ENCODE measurements at regions of chr3 and their contacts with region 1.

Region 1: DNA sequence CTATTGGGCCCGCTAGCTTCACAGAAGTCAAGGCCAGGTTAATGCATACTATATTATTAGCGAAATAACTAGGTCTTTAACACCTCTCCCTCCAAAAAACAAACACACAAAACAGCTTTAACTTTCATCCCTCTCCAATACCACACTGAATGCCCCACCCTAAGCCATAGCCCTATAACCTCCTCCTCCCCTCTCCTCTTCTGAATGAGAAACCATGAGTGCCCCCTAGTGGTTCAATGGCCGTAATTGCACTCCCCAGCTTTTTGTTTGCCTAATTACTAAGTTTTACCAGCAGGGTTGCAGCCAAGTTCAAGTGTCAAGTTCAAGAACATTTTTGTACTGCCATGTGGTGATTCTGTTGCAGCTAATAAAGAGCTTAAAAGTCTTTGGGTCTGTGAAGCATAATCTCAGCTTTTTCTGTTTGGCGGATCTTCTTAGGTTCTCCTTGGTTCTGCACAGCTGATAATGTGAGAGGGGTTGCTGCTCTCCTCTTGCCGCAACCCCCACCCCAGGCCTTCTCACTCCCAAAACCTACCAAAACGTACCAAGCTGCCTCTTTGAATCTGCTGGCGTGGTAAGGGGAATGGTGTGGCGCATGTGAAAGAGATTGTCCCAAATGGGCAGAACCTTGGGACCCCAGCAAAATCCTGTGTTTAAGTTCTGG is 57.9 kb downstream of the RPL22L1 start:
- DNase-seq: no peak
- ATAC-seq: peak; percentile 74

Region 2: DNA sequence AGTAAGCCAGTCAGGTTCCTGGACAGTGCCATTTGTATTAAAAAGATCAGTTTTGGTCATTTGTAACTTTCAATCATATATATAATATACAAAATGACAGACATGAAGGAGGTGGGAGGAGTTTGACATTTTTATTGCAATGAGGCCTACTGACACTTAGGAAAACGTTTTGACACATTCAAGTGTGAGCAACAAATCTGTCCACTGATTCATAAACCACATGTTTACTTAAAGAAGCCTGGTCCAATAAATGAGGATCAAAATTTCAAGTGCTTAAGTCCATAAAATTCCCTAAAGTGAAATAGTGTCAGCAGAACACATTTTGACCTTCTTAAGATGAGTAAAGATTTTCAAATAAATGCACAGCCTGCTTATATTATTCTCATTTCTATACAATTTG is 1285.8 kb before region 1 on chr3:
- intact Hi-C with region 1: no loop called
- DNase-seq: no peak
- ATAC-seq: no peak

Region 3: DNA sequence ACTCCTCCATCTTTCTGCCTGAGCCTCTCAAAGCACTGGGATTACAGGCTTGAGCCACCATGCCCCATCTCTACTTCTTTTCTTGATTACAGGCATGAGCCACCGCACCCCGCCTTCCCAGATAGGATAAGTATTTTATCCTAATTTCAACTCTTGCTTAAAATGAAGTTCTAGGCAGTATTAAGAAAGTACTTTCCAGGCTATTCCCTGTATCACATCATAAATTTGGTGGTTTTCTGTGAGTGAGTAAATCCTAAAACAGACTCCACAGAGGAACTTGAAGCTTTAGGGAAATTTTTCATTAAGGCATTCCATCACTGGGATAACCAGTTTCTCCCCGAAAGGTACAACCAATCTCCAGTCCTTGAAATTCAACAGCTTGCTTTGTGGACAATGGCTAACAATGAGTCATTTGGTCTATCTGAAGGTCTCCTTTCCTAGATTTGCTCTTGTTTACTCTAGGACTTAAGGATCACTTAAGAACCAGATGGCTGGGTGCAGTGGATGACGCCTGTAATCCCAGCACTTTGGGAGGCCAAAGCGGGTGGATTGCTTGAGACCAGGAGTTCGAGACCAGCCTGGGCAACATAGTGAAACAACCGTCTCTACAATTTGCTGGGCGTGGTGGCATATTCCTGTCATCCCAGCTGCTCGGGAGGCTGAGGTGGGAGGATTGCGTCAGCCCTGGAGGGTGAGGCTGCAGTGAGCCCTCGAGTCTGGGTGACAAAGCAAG is 504.2 kb before region 1 on chr3:
- intact Hi-C with region 1: loop called (anchors 5 kb)
- DNase-seq: no peak
- ATAC-seq: no peak

Region 4: GRCh38 chr3:170414202-170414663 is 397.8 kb before region 1 on chr3:
- intact Hi-C with region 1: loop called (anchors 2 kb)
- DNase-seq: no peak
- ATAC-seq: peak; percentile 49

Region 5: GRCh38 chr3:170553788-170554757 is 258.0 kb before region 1 on chr3:
- intact Hi-C with region 1: loop called (anchors 5 kb)
- DNase-seq: no peak
- ATAC-seq: no peak

Region 6: DNA sequence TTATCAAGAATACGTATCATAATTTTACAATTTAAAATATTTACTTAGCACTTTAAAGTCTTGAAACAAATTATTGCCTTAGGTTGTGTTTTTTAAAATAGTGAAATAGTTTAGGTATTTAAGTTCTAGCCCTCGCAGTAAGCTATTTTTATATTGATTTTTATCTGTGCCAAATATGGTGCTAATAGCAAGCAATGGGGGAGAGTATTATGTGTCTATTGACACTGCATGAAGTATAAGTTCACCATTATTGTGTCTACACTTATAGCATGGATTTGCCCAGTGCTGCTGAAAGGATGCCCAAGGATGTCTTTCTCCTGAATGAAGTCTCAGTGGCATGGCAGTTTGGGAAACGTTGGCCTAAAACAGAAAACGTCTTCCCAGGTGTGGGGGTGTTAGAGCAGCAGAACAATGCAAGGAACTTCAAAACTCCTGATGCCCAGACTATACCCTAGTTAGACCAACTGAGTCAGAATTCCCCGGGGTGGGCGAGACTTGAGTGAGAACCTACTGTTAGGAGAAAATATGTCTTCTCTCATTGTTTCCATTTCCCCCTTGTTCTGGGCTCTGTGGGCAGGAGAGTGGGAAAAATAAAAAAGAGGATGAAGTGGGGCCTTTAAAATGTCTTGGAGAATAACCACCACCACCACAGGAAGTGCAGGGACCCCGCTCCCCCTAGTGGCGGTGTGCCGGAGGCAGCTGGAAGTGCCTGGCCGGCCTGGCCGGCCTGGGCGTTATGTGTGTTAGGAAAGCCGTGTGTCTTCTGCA is 122.0 kb before region 1 on chr3:
- intact Hi-C with region 1: loop called (anchors 5 kb)
- DNase-seq: peak; percentile 74
- ATAC-seq: peak; percentile 73